GM23248 (cell line): ENCODE measurements at regions of chr2 and their contacts with region 1.

Region 1: DNA sequence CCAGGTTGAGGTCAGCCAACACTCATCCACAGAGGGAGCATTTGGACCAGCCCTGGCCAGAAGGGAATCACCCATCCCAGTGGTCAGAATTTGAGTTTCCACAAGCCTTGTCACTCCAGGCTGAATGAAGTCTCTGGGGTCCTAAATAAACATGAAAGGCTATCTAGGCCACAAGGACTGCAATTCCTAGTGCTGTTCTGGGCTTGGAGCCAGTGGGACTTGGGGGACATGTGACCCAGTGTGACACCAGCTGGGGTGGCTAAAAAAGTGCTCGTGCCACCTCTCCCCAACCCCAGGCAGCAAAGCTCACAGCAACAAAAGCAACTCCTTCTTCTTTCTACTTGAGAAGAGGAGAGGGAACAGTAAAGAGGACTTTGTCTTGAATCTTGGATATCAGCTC is 91.7 kb downstream of the MDH1 start:
- DNase-seq: no peak
- H3K4me3 ChIP-seq: no peak overlapping the region
- H3K27ac ChIP-seq: no peak overlapping the region
- H3K4me1 ChIP-seq: peaks cover 11% of the 10 kb centered on the region
- H3K27me3 ChIP-seq: no peaks in the 10 kb centered on the region

Region 2: GRCh38 chr2:62884514-62884913 is 795.9 kb before region 1 on chr2:
- in situ Hi-C with region 1: no loop called
- DNase-seq: peak; percentile 21
- H3K4me3 ChIP-seq: no peak overlapping the region
- H3K27ac ChIP-seq: no peak overlapping the region
- H3K4me1 ChIP-seq: peaks cover 9% of the 10 kb centered on the region
- H3K27me3 ChIP-seq: no peaks in the 10 kb centered on the region

Region 3: GRCh38 chr2:63849381-63850203 is 169.1 kb after region 1 on chr2:
- in situ Hi-C with region 1: loop called (anchors 10 kb)
- DNase-seq: peak; percentile 39
- H3K4me3 ChIP-seq: peak overlapping the region; percentile 54
- H3K27ac ChIP-seq: peak overlapping the region; percentile 65
- H3K4me1 ChIP-seq: peaks cover 65% of the 10 kb centered on the region
- H3K27me3 ChIP-seq: no peaks in the 10 kb centered on the region